H1 (cell line): ENCODE measurements at regions of chr14 and their contacts with region 1.

Region 1: DNA sequence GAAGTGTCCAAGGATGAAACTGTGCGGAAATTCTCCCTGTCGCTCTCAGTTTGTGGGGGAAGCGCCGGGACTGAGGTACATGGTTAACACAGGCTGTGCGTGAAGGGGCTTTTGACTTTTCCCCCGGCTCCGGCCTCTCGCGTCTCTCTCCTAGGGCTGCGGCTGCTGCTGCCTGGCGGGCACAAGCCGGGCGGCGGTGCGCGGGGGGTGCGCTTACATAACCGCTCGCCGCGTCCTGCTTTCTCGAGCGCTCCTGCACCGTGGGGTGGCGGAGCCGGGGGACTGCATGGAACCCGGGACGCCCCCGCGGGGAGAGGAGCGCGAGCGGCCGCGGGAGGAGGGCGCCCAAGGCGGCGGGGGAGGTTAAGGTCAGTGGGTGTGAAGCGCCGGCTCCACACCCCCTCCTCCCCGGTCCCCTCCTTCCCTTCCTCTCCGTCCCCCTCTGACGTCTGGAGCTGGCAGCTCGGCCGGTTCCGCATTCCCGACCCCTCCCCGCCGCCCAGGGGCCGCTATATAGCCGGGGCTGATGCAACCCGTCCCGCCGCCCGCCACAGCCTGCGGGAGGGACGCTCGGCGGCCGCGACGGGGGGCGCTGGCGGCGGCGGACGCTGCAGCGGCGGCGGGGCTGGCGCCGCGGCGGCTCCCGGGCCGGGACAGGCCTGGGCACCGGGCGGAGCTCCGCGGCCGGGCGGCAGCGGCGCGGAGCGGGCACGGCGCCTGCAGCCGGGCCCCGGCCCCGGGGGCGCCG is at the start of gene JDP2:
- DNase-seq: peak in 1 of 2 experiments; percentile 79
- H3K4me3 ChIP-seq: peak within 1 kb of the TSS; percentile 59 to 77 (median 70)
- H3K27ac ChIP-seq: no peak within 1 kb of the TSS
- H3K4me1 ChIP-seq: peaks cover 8 to 17% (median 15%) of the 10 kb centered on the region in 4 experiments
- H3K27me3 ChIP-seq: peaks cover 0 to 13% (median 13%) of the 10 kb centered on the region in 4 experiments; a peak in 5 of 7 replicates
- CTCF ChIP-seq: no peak
- EP300 ChIP-seq: no peak
- POLR2A ChIP-seq: no peak; a peak in 1 of 3 replicates
- RAD21 ChIP-seq: no peak
- total RNA-seq, gene JDP2: 23.6 and 27.2 TPM in 2 replicates

Region 2: GRCh38 chr14:75440733-75441477 is 13.2 kb after region 1 on chr14:
- CTCF ChIA-PET with region 1: interaction called, 16 read pairs
- POLR2A ChIA-PET with region 1: interaction called, 65 read pairs
- DNase-seq: no peak
- H3K4me3 ChIP-seq: no peak overlapping the region
- H3K27ac ChIP-seq: no peak overlapping the region
- H3K4me1 ChIP-seq: peaks cover 2 to 15% (median 9%) of the 10 kb centered on the region in 4 experiments
- H3K27me3 ChIP-seq: no peaks in the 10 kb centered on the region
- CTCF ChIP-seq: no peak
- EP300 ChIP-seq: no peak
- POLR2A ChIP-seq: no peak
- RAD21 ChIP-seq: no peak

Region 3: GRCh38 chr14:75452900-75453747 is 25.5 kb after region 1 on chr14:
- CTCF ChIA-PET with region 1: interaction called, 12 read pairs
- POLR2A ChIA-PET with region 1: interaction called, 24 read pairs
- DNase-seq: peak; percentile 82 to 92
- H3K4me3 ChIP-seq: peak overlapping the region in 1 of 4 experiments; percentile 29; a peak in 1 of 8 replicates
- H3K27ac ChIP-seq: peak overlapping the region; percentile 87
- H3K4me1 ChIP-seq: peaks cover 17 to 32% (median 28%) of the 10 kb centered on the region in 4 experiments
- H3K27me3 ChIP-seq: no peaks in the 10 kb centered on the region
- CTCF ChIP-seq: no peak; a peak in 1 of 4 replicates
- EP300 ChIP-seq: peak in 1 of 2 experiments; percentile 93; a peak in 2 of 3 replicates
- POLR2A ChIP-seq: peak in 1 of 2 experiments; percentile 53; a peak in 2 of 3 replicates
- RAD21 ChIP-seq: no peak; a peak in 1 of 4 replicates

Region 4: DNA sequence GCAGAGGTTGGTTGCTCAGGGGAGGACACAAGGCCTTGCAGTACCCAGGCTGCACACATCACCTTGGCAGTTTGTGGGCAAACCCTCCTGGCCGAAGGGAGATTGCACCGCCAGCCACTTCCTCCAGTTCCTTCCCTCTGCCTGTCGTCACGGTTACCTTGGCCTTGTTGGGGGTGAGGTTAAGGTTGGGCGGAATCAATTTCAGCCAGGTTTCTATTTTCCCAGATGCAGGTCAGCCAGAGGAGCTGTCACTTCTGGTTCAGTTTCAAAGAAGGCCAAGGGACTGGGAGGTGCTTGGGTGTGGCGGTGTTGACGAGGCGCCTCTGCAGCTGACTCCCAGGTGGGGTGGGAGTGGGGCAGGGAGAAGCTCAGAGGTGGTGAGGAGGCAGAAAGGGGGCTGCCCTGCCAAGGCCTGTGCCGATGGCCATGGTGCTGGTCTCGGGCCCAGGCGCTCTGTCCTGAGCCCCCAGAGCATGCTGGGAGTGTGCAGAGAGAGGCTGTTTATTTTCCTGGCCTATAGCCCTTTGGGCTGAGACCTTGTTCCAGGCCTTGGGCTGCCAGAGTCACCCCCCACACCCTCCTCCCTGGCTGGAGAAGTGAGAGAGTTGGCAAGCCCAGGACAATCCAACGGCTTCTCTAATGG is 31.6 kb after region 1 on chr14:
- CTCF ChIA-PET with region 1: interaction called, 4 read pairs
- POLR2A ChIA-PET with region 1: interaction called, 12 read pairs
- DNase-seq: no peak
- H3K4me3 ChIP-seq: no peak overlapping the region
- H3K27ac ChIP-seq: peak overlapping the region; percentile 13; the same call in 1 of the 2 replicates
- H3K4me1 ChIP-seq: peaks cover 6 to 21% (median 16%) of the 10 kb centered on the region in 4 experiments; a peak in 6 of 7 replicates
- H3K27me3 ChIP-seq: no peaks in the 10 kb centered on the region
- CTCF ChIP-seq: no peak
- EP300 ChIP-seq: no peak
- POLR2A ChIP-seq: no peak
- RAD21 ChIP-seq: no peak